Cardiac septum (tissue), 1 donor: ENCODE measurements at regions of chr3 and their contacts with region 1.

Region 1: DNA sequence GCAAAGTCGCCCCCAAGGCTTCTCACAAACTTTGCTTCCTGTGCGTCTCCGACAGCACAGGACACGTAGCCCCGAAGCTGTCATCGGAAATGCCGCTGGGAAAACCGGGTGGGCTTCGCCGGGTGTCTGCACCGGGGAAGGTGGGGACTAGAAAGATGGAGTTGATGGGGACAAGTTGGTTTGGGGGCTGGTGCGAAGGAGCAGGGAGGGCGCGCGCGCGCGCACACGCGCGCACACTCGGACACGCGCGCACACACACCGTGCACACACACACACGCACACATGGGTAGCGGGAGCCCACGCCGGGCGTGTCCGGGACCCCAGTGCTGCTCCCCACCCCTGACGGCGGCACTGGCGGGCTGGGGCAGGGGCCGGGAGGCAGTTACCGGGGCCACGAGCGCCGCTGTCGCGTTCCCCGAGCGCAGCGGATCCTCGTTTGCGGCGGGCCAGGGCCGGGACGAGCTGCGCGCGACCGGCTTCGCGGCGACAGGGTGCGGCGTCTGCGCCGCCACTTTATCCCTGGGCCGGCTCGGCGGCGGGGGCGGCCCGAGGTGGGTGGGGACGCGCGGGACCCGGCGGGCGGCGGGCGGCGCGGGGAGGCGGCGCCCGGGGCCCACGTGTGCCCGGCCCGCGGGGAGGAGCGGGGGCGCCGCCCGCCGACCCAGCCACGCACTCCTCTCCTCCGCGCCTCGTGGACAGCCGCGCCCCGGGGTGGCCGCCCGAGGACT is 547 bp upstream of the MGLL start:
- DNase-seq: peak; percentile 81

Region 2: DNA sequence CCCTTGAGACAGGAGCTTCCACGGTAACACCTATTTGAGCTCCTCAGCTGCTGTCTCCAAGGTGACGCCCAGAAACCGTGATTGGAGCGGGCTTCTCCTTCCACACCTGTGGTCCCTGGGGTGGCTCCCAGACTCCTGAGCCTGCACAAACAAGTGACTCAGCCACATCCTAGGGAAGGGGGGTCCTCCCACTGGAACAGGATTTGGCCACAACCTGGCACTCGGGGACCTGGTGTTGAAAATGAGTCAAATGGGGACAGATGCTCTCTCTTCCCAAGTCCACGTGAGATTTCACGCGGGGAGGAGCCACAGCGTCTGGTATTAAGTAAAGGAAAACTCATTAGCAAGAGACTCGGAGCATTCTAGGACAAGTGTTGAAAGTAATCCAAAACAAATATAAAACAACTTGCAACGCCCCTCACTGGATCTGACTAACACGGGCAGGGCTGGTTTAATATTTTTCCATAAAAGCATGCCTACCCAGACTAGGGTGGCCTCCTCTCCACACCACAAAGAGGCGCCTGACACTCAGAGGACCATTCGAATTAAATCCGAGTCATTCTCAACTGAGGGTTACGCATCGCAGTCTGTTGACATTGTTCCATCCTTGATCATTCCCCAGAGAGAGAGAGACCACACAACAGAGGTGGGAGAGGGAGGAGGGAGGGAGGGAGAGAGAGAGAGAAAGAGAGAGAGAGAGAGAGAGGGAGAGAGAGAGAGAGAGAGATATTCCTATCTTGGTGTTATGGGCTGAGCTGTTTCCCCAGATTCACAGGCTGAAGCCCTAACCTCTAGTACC is 74.9 kb before region 1 on chr3:
- intact Hi-C with region 1: loop called (anchors 2 kb)
- DNase-seq: peak; percentile 82

Region 3: DNA sequence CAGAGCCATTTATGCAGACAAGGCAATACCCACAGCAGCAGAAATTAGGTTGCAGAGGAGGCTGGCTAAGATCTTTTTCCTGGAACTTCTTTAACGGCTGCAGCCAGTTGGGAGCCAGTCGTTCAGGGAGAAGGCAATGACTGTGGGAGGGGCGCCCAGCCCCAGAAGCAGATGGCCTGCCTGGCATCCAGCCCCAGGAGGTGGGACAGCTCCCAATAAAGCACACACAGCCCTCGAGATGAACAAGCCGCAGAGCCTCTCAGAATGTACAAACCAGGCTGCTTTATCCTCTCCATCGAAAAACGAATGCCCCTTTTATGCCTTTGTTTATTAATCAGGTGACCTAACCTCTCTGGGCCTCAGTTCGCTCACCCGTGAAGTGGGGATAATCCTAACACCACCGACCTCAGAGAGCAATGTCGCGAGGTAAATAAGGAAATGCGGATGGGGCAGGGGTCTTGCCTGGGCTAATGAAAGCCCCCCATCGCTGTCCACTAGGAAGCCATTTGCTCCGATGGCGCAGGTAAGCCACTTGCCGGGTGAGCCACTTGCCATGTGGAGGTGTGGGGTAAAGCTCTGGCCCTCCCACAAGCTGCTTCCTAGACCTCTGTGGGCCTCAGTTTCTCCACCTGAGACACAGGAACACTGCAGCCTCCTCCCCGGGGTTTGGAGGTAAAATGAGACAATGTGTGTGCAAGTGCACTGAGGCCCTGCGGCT is 36.4 kb before region 1 on chr3:
- intact Hi-C with region 1: loop called (anchors 5 kb)
- DNase-seq: peak; percentile 88